ENCODE measurements at regions of chr19 and their contacts with region 1.

Region 1: DNA sequence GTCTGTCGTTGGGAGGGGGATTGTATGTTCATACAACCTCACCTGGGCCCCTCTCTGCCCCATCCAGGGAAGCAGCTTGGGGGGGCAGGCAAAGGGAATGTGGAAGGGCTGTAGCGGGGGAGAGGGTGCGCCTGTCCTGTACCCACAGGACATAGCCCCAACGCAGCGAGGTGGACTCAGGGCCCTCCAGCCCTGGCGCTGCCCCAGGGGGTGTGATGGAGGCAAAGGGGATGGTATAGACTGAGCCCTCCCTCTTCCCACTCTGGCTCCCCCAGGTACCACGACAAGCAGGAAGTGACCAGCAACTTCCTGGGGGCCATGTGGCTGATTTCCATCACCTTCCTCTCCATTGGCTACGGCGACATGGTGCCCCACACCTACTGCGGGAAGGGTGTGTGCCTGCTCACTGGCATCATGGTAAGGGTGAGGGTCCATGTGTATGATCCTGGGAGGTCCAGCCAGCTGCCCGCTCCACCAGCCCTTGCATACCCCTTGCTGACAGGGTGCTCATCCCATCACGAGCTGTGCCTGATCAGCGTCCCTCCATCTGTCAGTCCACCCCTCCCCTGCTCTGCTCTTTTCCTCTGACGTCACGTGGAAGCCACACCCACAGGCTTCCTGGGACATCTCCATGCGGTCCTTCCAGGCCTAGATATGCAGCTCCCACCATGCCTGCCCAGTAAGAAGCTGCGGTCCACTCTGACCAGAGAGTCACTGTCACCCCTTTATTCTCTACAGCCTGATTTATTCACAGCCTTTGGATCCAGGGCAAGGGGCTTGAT is 18.3 kb downstream of the KCNN1 start:
- DNase-seq: no peak
- ATAC-seq: no peak
- H3K4me3 ChIP-seq: no peak overlapping the region
- H3K27ac ChIP-seq: no peak overlapping the region
- H3K4me1 ChIP-seq: no peaks in the 10 kb centered on the region
- H3K27me3 ChIP-seq: no peaks in the 10 kb centered on the region
- CTCF ChIP-seq: no peak
- EP300 ChIP-seq: no peak
- POLR2A ChIP-seq: no peak
- RAD21 ChIP-seq: no peak

Region 2: DNA sequence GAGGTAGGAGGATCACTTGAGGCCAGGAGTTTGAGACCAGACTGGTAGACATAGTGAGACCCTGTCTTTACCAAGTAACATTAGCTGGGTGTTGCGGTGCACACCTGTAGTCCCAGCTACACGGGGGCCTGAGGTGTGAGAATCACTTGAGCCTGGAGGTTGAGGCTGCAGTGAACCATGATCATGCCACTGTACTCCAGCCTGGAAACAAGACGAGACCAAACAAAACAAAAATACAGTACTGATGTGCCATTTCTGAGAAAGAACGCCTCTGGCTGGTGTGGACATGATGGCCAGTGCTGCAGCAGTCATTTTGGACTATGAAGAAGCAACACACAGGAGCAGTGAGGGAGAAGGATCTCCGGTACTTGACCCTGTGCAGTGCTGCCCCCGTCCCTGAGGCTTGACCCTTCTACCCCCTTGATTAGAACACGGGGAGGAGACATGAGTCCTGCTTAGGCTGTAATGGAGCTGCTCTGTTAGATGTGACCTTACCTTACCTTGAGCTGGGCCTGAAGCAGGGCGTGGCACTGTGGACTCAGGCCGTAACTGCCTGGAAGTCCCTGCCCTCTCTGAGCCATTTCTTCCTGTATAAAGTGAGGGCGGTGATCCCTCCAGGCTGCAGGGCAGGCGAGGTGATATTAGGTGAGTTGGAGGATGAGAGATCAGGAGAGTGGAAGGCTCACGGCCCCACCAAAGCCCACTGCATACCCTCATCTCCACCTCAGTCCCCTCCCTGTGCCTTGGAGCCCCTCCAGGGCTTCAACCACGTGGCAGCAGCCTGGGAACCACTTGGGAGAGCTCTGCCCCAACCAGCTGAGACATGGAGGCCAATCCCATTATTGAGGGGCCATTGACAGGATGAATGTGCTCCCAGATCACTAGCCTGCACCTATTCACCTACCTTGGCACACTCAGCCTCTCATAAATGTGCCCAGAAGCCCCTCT is 119.6 kb before region 1 on chr19:
- CTCF ChIA-PET with region 1: no interaction called
- POLR2A ChIA-PET with region 1: no interaction called
- RAD21 ChIA-PET with region 1: no interaction called
- SMC1A ChIA-PET with region 1: no interaction called
- in situ Hi-C with region 1: loop called (anchors 5 kb)
- intact Hi-C with region 1: no loop called
- DNase-seq: no peak
- ATAC-seq: peak; percentile 29
- H3K4me3 ChIP-seq: no peak overlapping the region
- H3K27ac ChIP-seq: no peak overlapping the region
- H3K4me1 ChIP-seq: peaks cover 12% of the 10 kb centered on the region
- H3K27me3 ChIP-seq: no peaks in the 10 kb centered on the region
- CTCF ChIP-seq: no peak
- EP300 ChIP-seq: no peak
- POLR2A ChIP-seq: peak; percentile 61
- RAD21 ChIP-seq: no peak

Region 3: GRCh38 chr19:17975032-17975431 is 10.2 kb before region 1 on chr19:
- CTCF ChIA-PET with region 1: no interaction called
- POLR2A ChIA-PET with region 1: interaction called, 10 read pairs
- RAD21 ChIA-PET with region 1: no interaction called
- SMC1A ChIA-PET with region 1: no interaction called
- in situ Hi-C with region 1: no loop called
- intact Hi-C with region 1: no loop called
- DNase-seq: no peak
- ATAC-seq: no peak
- H3K4me3 ChIP-seq: no peak overlapping the region
- H3K27ac ChIP-seq: no peak overlapping the region
- H3K4me1 ChIP-seq: peaks cover 4% of the 10 kb centered on the region
- H3K27me3 ChIP-seq: peaks cover 0 to 2% of the 10 kb centered on the region in 2 experiments; a peak in 1 of 4 replicates
- CTCF ChIP-seq: no peak
- EP300 ChIP-seq: no peak
- POLR2A ChIP-seq: no peak
- RAD21 ChIP-seq: no peak